ENCODE measurements at regions of chr1 and their contacts with region 1.

Region 1: DNA sequence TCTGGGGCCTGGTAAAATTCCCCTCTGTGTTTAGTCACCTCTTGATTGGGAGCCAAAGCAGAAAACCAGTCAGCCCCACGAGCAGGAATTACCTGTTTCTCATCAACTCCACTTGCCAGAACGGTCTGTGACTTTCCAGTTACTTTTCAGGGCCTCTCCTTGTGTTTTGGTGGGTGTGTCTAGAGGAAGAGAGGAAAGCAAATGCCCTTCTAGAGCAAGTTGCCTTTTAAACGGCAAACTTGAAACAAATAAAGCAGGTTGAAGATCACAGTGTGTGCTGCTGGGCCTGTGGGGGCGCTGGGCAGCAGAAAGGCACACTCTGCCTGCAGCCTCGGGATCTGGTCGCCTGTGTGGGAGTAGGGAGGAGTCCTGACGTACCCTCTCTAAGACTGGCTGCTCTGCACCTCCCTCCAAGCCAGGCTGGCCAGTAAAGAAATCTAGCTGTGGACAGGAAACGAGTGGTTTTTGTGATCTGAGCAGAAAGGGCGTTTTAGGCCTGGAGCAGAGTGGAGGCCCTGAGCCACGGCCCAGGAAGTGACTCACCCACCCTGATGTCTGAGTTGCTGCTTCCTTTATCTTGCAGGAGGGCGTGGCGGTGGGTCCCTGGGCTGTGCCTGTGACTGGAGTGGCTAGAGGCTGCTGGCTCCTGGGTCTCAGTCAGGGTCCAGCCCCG is 11.1 kb upstream of the S100A11 start:
- DNase-seq: peak; percentile 96
- ATAC-seq: peak; percentile 97
- H3K4me3 ChIP-seq: peak overlapping the region; percentile 20; the same call in 1 of the 2 replicates
- H3K27ac ChIP-seq: peak overlapping the region; percentile 80
- H3K4me1 ChIP-seq: peaks cover 15% of the 10 kb centered on the region
- H3K27me3 ChIP-seq: 0 out of 4 replicates have a peak, but pooled peaks cover 0 to 3% of the 10 kb centered on the region in 2 experiments
- CTCF ChIP-seq: peak; percentile 51 to 65 (median 65)
- EP300 ChIP-seq: no peak
- POLR2A ChIP-seq: peak; percentile 77
- RAD21 ChIP-seq: no peak

Region 2: GRCh38 chr1:152034646-152035405 is 13.0 kb before region 1 on chr1:
- CTCF ChIA-PET with region 1: interaction called, 40 read pairs
- POLR2A ChIA-PET with region 1: interaction called, 3 read pairs
- RAD21 ChIA-PET with region 1: interaction called, 3 read pairs
- SMC1A ChIA-PET with region 1: interaction called, 3 read pairs
- in situ Hi-C with region 1: no loop called
- intact Hi-C with region 1: no loop called
- DNase-seq: peak; percentile 57
- ATAC-seq: peak; percentile 72
- H3K4me3 ChIP-seq: no peak overlapping the region
- H3K27ac ChIP-seq: peak overlapping the region; percentile 46; the same call in 1 of the 2 replicates
- H3K4me1 ChIP-seq: peaks cover 16% of the 10 kb centered on the region
- H3K27me3 ChIP-seq: no peaks in the 10 kb centered on the region
- CTCF ChIP-seq: peak; percentile 43 to 67 (median 64)
- EP300 ChIP-seq: no peak
- POLR2A ChIP-seq: no peak
- RAD21 ChIP-seq: peak; percentile 23; the same call in 1 of the 2 replicates